ENCODE measurements at regions of chr1 and their contacts with region 1.

Region 1: DNA sequence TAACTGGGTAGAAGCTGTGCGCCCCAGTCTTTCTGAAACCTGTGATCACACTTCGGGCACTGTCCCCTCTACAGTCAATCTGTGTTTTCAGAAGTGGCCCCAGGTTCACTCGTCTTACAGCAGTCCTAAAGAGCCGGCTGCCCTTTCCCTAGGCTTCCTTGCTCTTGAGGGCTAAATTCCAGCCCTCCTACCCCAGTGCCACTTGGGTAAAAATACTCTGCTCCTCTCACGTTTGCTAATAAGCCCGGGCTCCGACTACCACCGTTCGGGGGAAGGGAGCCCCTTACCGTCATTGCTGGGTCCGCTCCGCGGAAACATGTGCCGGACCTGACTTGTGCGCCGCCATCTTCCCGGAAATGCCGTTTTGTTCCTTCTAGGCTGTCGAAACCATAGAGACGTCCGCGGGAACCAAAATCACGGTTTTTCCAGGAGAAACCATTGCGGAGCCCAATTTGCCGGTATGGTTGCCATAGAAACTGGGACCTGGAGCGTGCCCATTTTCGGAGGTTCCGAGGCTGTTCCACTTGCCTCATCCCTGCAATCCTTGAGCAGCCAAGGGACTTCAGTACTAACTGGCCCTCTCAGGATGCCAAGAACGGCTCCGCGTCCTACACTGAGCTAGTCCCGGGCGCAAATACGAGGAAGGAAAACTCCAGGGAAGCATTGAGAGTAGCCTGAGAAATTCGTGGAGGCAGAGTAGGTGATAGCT is at the start of gene GPATCH4:
- DNase-seq: peak; percentile 61 to 66
- ATAC-seq: peak; percentile 88 to 90
- H3K4me3 ChIP-seq: peak within 1 kb of the TSS; percentile 63 to 88 (median 82)
- H3K27ac ChIP-seq: peak within 1 kb of the TSS; percentile 77 to 87 (median 82)
- H3K4me1 ChIP-seq: peaks cover 15 to 16% of the 10 kb centered on the region in 2 donors
- H3K27me3 ChIP-seq: no peaks in the 10 kb centered on the region
- CTCF ChIP-seq: no peak
- POLR2A ChIP-seq: peak in 1 of 2 donors; percentile 30
- total RNA-seq, gene GPATCH4: 35.6 to 103 (median 47.6) TPM

Region 2: GRCh38 chr1:156282479-156283222 is 318.6 kb before region 1 on chr1 and contains the start of gene SMG5:
- in situ Hi-C with region 1: no loop called
- intact Hi-C with region 1: no loop called
- DNase-seq: peak; percentile 97
- ATAC-seq: peak; percentile 87 to 90
- H3K4me3 ChIP-seq: peak within 1 kb of the TSS; percentile 72 to 97 (median 82)
- H3K27ac ChIP-seq: peak within 1 kb of the TSS; percentile 90 to 99 (median 94)
- H3K4me1 ChIP-seq: peaks cover 27 to 33% of the 10 kb centered on the region in 2 donors
- H3K27me3 ChIP-seq: no peaks in the 10 kb centered on the region
- CTCF ChIP-seq: no peak
- POLR2A ChIP-seq: peak; percentile 91 to 95
- total RNA-seq, gene SMG5: 47.4 to 83.1 (median 62.7) TPM

Region 3: GRCh38 chr1:156451505-156452160 is 149.6 kb before region 1 on chr1:
- in situ Hi-C with region 1: loop called (anchors 5 kb)
- intact Hi-C with region 1: loop called (anchors 1 kb)
- DNase-seq: no peak
- ATAC-seq: no peak
- H3K4me3 ChIP-seq: no peak overlapping the region
- H3K27ac ChIP-seq: no peak overlapping the region
- H3K4me1 ChIP-seq: no peaks in the 10 kb centered on the region
- H3K27me3 ChIP-seq: no peaks in the 10 kb centered on the region
- CTCF ChIP-seq: no peak
- POLR2A ChIP-seq: no peak

Region 4: GRCh38 chr1:156510709-156511108 is 90.6 kb before region 1 on chr1:
- in situ Hi-C with region 1: no loop called
- intact Hi-C with region 1: loop called (anchors 5 kb)
- DNase-seq: peak; percentile 99 to 100
- ATAC-seq: peak; percentile 73 to 75
- H3K4me3 ChIP-seq: peak overlapping the region; percentile 5 to 92 (median 56)
- H3K27ac ChIP-seq: peak overlapping the region; percentile 96 to 99 (median 98)
- H3K4me1 ChIP-seq: peaks cover 34 to 57% of the 10 kb centered on the region in 2 donors
- H3K27me3 ChIP-seq: no peaks in the 10 kb centered on the region
- CTCF ChIP-seq: no peak
- POLR2A ChIP-seq: no peak

Measured in gastrocnemius medialis (tissue), 4 donors.